ENCODE measurements at regions of chr4 and their contacts with region 1.

Region 1: DNA sequence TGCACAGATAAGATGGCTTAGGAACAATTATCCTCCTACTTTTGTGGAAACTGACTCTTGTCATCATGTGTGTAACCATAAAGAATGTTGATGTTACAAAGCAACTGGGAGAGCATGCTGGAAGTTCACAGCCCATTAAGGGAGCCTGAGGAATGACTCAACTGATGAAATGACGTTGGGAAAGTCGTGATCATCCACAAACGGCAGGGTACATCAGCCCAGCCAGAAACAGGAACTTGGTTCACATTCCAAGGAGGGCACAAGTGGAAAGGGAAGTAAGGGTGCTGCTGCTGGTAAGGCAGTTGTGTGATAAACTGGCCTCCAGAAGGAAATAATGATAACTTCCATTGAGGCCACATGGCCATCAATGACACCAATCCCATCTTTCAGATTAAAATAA is 6.7 kb downstream of the TEC start:
- DNase-seq: no peak
- CTCF ChIP-seq: no peak

Region 2: GRCh38 chr4:48247142-48247877 is 15.6 kb before region 1 on chr4:
- CTCF ChIA-PET with region 1: interaction called, 27 read pairs
- POLR2A ChIA-PET with region 1: interaction called, 9 read pairs
- DNase-seq: no peak
- CTCF ChIP-seq: no peak

Measured in GM10248 (cell line).